ENCODE measurements at regions of chr15 and their contacts with region 1.

Region 1: GRCh38 chr15:74558706-74559105 is 17.7 kb downstream of the ARID3B start:
- DNase-seq: no peak
- H3K4me3 ChIP-seq: no peak overlapping the region
- H3K27ac ChIP-seq: no peak overlapping the region
- H3K4me1 ChIP-seq: no peaks in the 10 kb centered on the region
- H3K27me3 ChIP-seq: no peaks in the 10 kb centered on the region
- CTCF ChIP-seq: no peak
- EP300 ChIP-seq: no peak
- POLR2A ChIP-seq: no peak
- RAD21 ChIP-seq: no peak

Region 2: GRCh38 chr15:74489518-74490338 is 69.0 kb before region 1 on chr15:
- CTCF ChIA-PET with region 1: no interaction called
- POLR2A ChIA-PET with region 1: no interaction called
- DNase-seq: peak; percentile 41 to 86
- H3K4me3 ChIP-seq: peak overlapping the region in 1 of 4 experiments; percentile 26; a peak in 1 of 8 replicates
- H3K27ac ChIP-seq: no peak overlapping the region
- H3K4me1 ChIP-seq: peaks cover 0 to 4% (median 4%) of the 10 kb centered on the region in 4 experiments; a peak in 5 of 7 replicates
- H3K27me3 ChIP-seq: no peaks in the 10 kb centered on the region
- CTCF ChIP-seq: peak; percentile 72 to 87 (median 76)
- EP300 ChIP-seq: no peak
- POLR2A ChIP-seq: peak in 1 of 2 experiments; percentile 39; a peak in 1 of 3 replicates
- RAD21 ChIP-seq: peak; percentile 68 to 72

Region 3: DNA sequence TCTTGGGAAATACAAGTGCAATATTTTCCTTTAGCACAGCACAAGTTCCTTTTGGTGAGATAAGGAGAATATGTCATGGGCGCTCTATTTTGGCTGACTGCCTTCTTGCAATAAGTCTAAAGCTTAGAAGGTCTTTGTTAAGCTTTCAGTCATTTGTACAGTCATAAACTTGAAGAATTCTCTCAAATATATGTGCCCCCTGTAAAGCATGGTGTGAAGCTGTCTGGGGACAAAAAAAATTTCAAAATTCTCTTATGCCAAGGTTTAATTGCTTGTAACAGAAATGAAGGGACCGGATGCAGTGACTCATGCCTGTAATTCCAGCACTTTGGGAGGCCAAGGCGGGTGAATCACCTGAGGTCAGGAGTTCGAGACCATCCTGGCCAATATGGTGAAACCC is 39.4 kb before region 1 on chr15:
- CTCF ChIA-PET with region 1: no interaction called
- POLR2A ChIA-PET with region 1: no interaction called
- DNase-seq: no peak
- H3K4me3 ChIP-seq: no peak overlapping the region
- H3K27ac ChIP-seq: no peak overlapping the region
- H3K4me1 ChIP-seq: no peaks in the 10 kb centered on the region; a peak in 1 of 7 replicates
- H3K27me3 ChIP-seq: no peaks in the 10 kb centered on the region
- CTCF ChIP-seq: no peak
- EP300 ChIP-seq: no peak
- POLR2A ChIP-seq: no peak
- RAD21 ChIP-seq: no peak

Region 4: DNA sequence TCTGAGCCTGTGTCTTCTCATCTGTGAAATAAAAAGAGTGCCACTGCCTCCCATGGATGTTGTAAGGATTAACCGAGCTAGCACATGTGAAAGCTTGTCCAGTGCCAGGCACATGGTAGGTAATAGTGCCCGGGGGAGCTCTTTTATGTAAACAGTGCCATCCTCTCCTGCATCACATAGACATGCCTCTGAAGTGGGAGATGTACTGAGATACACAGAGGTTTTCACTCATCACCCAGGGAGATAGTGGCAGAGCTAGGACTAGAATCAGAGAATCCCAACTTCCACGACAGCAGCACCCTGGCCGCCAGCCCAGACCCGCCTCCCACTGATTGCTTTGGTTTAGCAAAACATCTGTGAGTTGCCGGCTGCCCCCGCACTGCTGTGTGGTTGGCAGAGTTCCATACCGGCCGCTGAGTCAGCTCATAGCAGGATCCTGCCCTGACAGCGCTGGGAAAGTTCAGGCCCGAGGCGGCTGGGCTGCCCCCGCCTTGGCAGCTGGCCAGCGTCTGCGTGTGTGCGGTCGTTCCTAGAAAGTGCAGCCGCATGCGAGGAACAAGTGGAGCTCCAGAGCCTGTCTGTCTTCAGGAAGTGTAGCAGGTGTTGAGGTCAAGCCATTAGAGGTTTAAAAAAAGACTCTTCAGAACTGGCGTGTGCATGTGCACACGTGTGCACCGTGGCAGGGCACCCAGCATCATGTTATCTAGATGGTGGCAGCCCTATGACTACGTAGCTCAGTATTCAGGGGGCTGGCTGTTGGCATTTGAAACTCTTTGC is 12.6 kb before region 1 on chr15:
- CTCF ChIA-PET with region 1: interaction called, 4 read pairs
- POLR2A ChIA-PET with region 1: interaction called, 14 read pairs
- DNase-seq: no peak
- H3K4me3 ChIP-seq: no peak overlapping the region
- H3K27ac ChIP-seq: no peak overlapping the region
- H3K4me1 ChIP-seq: peaks cover 5 to 13% (median 8%) of the 10 kb centered on the region in 4 experiments; a peak in 6 of 7 replicates
- H3K27me3 ChIP-seq: no peaks in the 10 kb centered on the region
- CTCF ChIP-seq: no peak
- EP300 ChIP-seq: no peak
- POLR2A ChIP-seq: no peak
- RAD21 ChIP-seq: no peak

Measured in H1 (cell line).